Activated B cell treated with CpG ODN at 0.5 μM for 24 hours (primary cell): ENCODE measurements at regions of chr18 and their contacts with region 1.

Region 1: GRCh38 chr18:48800876-48801727 is 149.7 kb downstream of the SMAD7 start:
- DNase-seq: peak; percentile 20
- ATAC-seq: peak; percentile 85
- H3K4me3 Mint-ChIP-seq: peak overlapping the region; percentile 67
- H3K27ac Mint-ChIP-seq: peak overlapping the region; percentile 82
- H3K4me1 Mint-ChIP-seq: peaks cover 44% of the 10 kb centered on the region
- H3K27me3 Mint-ChIP-seq: no peaks in the 10 kb centered on the region
- CTCF ChIP-seq: no peak

Region 2: DNA sequence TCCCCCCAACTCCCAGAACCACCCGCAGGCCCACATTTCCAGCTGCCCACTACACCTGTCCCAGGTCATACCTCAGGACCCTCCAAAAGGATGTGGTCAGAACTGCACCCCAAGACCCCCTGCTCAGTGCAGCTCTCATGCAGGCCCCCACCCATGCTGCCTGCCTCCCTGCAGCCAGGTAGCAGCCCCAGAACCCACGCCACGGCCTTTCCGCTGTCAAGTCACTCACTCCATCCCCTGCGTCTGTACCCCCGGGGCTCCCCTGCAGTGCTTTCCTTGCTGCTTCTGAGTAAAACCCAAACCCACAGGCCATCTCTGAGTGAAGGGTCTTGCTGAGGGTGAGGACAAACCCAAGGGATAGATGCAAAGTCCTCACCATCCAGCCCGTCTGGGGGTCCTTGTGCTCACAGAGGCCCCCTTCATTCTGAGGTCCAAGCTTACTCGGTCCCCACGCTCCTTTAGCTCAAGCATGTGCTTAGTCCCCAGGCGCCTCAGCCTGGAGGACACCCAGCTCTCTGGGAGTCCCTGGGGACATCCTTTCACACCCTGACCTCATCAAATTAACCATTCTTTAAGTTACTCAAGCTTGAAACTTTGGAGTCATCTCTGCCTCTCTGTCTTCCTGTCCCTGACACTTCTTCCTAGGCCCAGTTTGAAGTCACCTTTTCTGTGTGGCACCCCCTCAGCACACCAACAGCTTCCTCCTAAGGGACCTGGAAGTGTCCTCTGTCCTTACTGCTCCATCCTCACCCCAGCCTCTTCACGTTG is 19.6 kb after region 1 on chr18:
- CTCF ChIA-PET with region 1: interaction called, 4 read pairs
- POLR2A ChIA-PET with region 1: interaction called, 19 read pairs
- intact Hi-C with region 1: loop called (anchors 1 kb)
- DNase-seq: peak; percentile 33
- ATAC-seq: peak; percentile 98
- H3K4me3 Mint-ChIP-seq: peak overlapping the region; percentile 4
- H3K27ac Mint-ChIP-seq: peak overlapping the region; percentile 32
- H3K4me1 Mint-ChIP-seq: peaks cover 18% of the 10 kb centered on the region
- H3K27me3 Mint-ChIP-seq: no peaks in the 10 kb centered on the region
- CTCF ChIP-seq: no peak

Region 3: GRCh38 chr18:48834413-48835031 is 33.4 kb after region 1 on chr18:
- CTCF ChIA-PET with region 1: no interaction called
- POLR2A ChIA-PET with region 1: interaction called, 4 read pairs
- intact Hi-C with region 1: loop called (anchors 1 kb)
- DNase-seq: peak; percentile 42
- ATAC-seq: peak; percentile 83
- H3K4me3 Mint-ChIP-seq: peak overlapping the region; percentile 76
- H3K27ac Mint-ChIP-seq: peak overlapping the region; percentile 80
- H3K4me1 Mint-ChIP-seq: peaks cover 37% of the 10 kb centered on the region
- H3K27me3 Mint-ChIP-seq: no peaks in the 10 kb centered on the region
- CTCF ChIP-seq: no peak